Common myeloid progenitor, CD34-positive (primary cell): ENCODE measurements at regions of chr22 and their contacts with region 1.

Region 1: GRCh38 chr22:24106385-24107381 is 74.6 kb upstream of the SUSD2 start:
- DNase-seq: peak; percentile 31 to 49 (median 42)
- H3K4me3 ChIP-seq: no peak overlapping the region
- H3K27ac ChIP-seq: no peak overlapping the region
- H3K4me1 ChIP-seq: peaks cover 0 to 2% (median 1%) of the 10 kb centered on the region in 4 experiments
- H3K27me3 ChIP-seq: no peaks in the 10 kb centered on the region

Region 2: GRCh38 chr22:24175160-24175808 is 68.6 kb after region 1 on chr22:
- CTCF ChIA-PET with region 1: interaction called, 1,213 read pairs
- POLR2A ChIA-PET with region 1: interaction called, 3 read pairs
- DNase-seq: peak; percentile 58 to 72 (median 63)
- H3K4me3 ChIP-seq: no peak overlapping the region
- H3K27ac ChIP-seq: no peak overlapping the region
- H3K4me1 ChIP-seq: no peaks in the 10 kb centered on the region
- H3K27me3 ChIP-seq: no peaks in the 10 kb centered on the region